Common myeloid progenitor, CD34-positive (primary cell): ENCODE measurements at regions of chr2 and their contacts with region 1.

Region 1: DNA sequence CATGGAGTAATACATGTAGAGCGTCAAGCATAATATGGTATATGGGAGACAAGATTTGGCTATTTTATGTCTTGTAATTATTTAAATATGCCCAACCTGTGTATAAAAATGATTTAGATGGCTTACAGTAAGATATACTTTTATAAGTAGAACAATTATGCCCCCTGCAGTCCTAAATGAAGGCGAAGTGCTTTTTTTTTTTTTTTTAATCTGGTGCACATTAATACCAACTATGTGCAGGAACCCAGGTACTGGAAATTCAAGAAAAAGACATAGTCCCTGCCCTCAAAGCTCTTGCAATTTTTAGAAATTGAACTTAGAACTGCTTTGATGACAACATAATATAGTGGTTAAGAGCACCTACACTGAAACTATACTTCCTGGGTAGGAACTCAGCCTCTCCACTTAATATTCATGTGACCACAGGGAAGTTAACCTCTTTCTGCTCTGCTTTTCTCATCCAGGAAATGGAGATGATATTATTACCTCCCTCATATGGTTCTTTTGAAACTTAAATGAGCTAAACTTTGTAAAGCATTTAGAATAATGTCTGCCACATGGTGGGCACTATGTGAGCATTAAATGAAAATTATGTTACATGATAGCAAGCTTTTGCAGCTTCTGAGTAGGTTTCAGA is 38.1 kb downstream of the AFTPH start:
- DNase-seq: peak; percentile 48 to 74 (median 71)
- H3K4me3 ChIP-seq: no peak overlapping the region
- H3K27ac ChIP-seq: no peak overlapping the region
- H3K4me1 ChIP-seq: peaks cover 6 to 24% (median 12%) of the 10 kb centered on the region in 4 experiments
- H3K27me3 ChIP-seq: no peaks in the 10 kb centered on the region

Region 2: GRCh38 chr2:64015391-64015790 is 546.9 kb before region 1 on chr2:
- CTCF ChIA-PET with region 1: no interaction called
- POLR2A ChIA-PET with region 1: no interaction called
- DNase-seq: no peak
- H3K4me3 ChIP-seq: peak overlapping the region in 1 of 7 experiments; percentile 41
- H3K27ac ChIP-seq: no peak overlapping the region
- H3K4me1 ChIP-seq: peaks cover 5 to 26% (median 15%) of the 10 kb centered on the region in 4 experiments
- H3K27me3 ChIP-seq: no peaks in the 10 kb centered on the region

Region 3: GRCh38 chr2:64052468-64053241 is 509.6 kb before region 1 on chr2:
- CTCF ChIA-PET with region 1: interaction called, 20 read pairs
- POLR2A ChIA-PET with region 1: no interaction called
- DNase-seq: peak; percentile 19 to 67 (median 58)
- H3K4me3 ChIP-seq: no peak overlapping the region
- H3K27ac ChIP-seq: no peak overlapping the region
- H3K4me1 ChIP-seq: peaks cover 6 to 22% (median 15%) of the 10 kb centered on the region in 4 experiments
- H3K27me3 ChIP-seq: no peaks in the 10 kb centered on the region

Region 4: GRCh38 chr2:64488050-64488974 is 74.0 kb before region 1 on chr2:
- CTCF ChIA-PET with region 1: interaction called, 12 read pairs
- POLR2A ChIA-PET with region 1: no interaction called
- DNase-seq: peak; percentile 68 to 83 (median 74)
- H3K4me3 ChIP-seq: no peak overlapping the region
- H3K27ac ChIP-seq: no peak overlapping the region
- H3K4me1 ChIP-seq: peaks cover 3 to 8% (median 5%) of the 10 kb centered on the region in 4 experiments
- H3K27me3 ChIP-seq: peaks cover 0 to 27% (median 10%) of the 10 kb centered on the region in 5 experiments

Region 5: DNA sequence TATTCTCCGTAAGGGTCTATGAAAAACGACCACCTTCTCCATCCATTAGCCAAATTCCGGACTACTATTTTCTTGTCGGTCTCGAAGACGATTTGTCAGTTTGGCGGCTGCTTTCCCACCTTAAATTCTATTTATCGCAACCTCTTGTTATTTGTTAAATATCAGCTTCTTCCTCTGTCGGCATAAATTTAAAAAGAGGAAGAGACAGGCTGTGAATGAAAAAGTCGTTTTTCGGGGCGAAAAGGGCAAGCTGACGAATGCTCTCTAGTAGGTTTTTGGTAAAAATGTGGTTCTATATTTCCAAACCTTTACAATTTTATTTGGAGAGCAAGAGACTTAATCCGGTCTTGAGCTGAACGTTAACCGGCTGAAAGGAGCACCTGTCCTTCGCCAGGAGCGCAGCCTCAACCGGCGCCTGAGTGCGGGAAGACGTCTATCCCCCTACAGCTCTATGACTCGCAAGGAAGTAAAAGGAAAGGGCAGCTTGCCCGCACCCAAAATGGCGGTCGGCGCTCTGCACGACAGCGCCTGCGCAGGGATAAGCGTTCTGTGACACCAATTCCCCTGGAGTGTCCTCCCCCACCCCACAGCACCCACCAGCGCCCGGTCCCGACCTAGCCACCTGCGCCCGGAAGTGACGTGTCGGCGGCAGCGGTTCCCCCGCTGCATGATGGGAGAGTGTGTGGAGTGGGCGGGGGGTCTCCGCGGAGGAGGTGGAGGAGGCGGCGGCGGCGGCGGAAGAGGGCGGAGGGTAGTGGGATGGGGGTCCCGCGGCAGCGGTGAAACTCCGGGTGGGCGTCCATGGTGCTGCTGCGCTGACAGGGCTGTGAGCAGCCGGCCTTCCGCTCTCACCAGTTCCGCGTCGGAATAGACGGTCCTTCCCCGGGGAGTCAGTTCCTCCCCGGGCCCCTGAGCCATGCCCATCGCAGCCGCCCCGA is 38.3 kb before region 1 on chr2 and contains the start of gene AFTPH:
- CTCF ChIA-PET with region 1: interaction called, 82 read pairs
- POLR2A ChIA-PET with region 1: interaction called, 3 read pairs
- DNase-seq: peak; percentile 99 to 100 (median 100)
- H3K4me3 ChIP-seq: peak within 1 kb of the TSS; percentile 89 to 100 (median 99)
- H3K27ac ChIP-seq: peak within 1 kb of the TSS; percentile 97
- H3K4me1 ChIP-seq: peaks cover 17 to 43% (median 21%) of the 10 kb centered on the region in 4 experiments
- H3K27me3 ChIP-seq: no peaks in the 10 kb centered on the region

Region 6: DNA sequence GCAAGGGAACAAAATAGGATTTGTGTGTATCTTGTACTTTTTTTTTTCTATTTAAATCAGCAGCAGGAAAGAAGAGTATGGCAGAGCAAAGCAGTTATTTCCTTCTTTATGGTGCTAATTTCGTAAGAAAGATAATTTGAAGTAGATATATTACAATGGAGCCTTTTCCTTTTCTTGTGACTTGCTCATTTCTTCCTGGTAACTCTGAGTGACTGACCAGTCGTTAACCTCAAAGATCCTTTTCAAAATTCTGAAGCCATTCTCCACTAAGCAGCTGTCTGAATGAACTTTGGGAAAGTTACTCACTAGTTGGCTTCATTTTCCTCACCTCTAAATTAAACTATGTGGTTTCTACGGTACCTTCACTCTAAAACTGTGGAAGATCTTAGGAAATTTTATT is 13.5 kb before region 1 on chr2:
- CTCF ChIA-PET with region 1: interaction called, 39 read pairs
- POLR2A ChIA-PET with region 1: interaction called, 3 read pairs
- DNase-seq: no peak
- H3K4me3 ChIP-seq: no peak overlapping the region
- H3K27ac ChIP-seq: no peak overlapping the region
- H3K4me1 ChIP-seq: peaks cover 0 to 7% (median 1%) of the 10 kb centered on the region in 4 experiments
- H3K27me3 ChIP-seq: no peaks in the 10 kb centered on the region